ENCODE measurements at regions of chr12 and their contacts with region 1.

Region 1: GRCh38 chr12:96285158-96285557 is 91.0 kb downstream of the ELK3 start:
- DNase-seq: no peak
- ATAC-seq: no peak
- H3K4me3 ChIP-seq: no peak overlapping the region
- H3K4me3 Mint-ChIP-seq: no peak overlapping the region
- H3K27ac ChIP-seq: no peak overlapping the region
- H3K27ac Mint-ChIP-seq: no peak overlapping the region
- H3K4me1 ChIP-seq: no peaks in the 10 kb centered on the region
- H3K4me1 Mint-ChIP-seq: peaks cover 7% of the 10 kb centered on the region
- H3K27me3 ChIP-seq: no peaks in the 10 kb centered on the region
- H3K27me3 Mint-ChIP-seq: no peaks in the 10 kb centered on the region
- CTCF ChIP-seq: no peak

Region 2: DNA sequence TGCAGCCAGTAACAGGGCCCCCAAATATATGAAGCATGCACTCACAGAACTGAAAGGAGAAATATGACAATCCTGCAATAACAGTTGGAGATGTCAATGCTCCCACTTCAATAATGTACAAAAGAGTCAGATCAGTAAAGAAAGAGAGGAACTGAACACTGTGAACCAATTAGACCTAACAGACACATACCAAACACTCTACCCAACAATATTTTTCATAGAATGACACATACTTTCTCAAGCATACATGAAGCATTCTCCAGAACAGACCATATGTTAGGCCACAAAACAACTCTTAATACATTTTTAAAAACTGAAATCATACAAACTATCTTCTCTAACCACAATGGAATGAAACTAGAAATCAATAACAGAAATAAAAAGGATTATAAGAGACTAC is 10.8 kb before region 1 on chr12:
- CTCF ChIA-PET with region 1: no interaction called
- POLR2A ChIA-PET with region 1: no interaction called
- intact Hi-C with region 1: loop called in 1 of 2 experiments (anchors 2 kb)
- DNase-seq: no peak
- ATAC-seq: no peak
- H3K4me3 ChIP-seq: no peak overlapping the region
- H3K4me3 Mint-ChIP-seq: no peak overlapping the region
- H3K27ac ChIP-seq: peak overlapping the region in 1 of 2 experiments; percentile 10
- H3K27ac Mint-ChIP-seq: no peak overlapping the region
- H3K4me1 ChIP-seq: no peaks in the 10 kb centered on the region
- H3K4me1 Mint-ChIP-seq: peaks cover 20% of the 10 kb centered on the region
- H3K27me3 ChIP-seq: no peaks in the 10 kb centered on the region
- H3K27me3 Mint-ChIP-seq: no peaks in the 10 kb centered on the region
- CTCF ChIP-seq: no peak

Region 3: DNA sequence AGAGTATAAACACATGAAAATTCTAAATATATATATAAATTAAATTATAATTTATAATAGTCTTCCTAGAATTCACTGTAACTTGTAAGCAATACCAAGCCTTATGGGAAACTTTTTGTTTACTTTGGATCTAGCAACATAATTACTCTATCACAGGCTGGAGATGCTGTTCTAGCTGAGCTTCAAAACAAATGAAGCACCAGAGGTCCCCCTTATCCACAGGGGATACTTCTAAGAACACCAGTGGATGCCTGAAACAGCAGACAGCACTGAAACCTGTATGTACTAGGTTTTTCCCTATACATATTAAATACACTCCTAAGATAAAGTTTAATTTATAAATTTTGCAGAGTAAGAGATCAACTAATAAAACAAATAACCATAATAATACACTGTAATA is 18.5 kb after region 1 on chr12:
- CTCF ChIA-PET with region 1: no interaction called
- POLR2A ChIA-PET with region 1: no interaction called
- intact Hi-C with region 1: loop called in 1 of 2 experiments (anchors 2 kb)
- DNase-seq: no peak
- ATAC-seq: no peak
- H3K4me3 ChIP-seq: no peak overlapping the region
- H3K4me3 Mint-ChIP-seq: no peak overlapping the region
- H3K27ac ChIP-seq: no peak overlapping the region
- H3K27ac Mint-ChIP-seq: no peak overlapping the region
- H3K4me1 ChIP-seq: peaks cover 3% of the 10 kb centered on the region
- H3K4me1 Mint-ChIP-seq: peaks cover 28% of the 10 kb centered on the region
- H3K27me3 ChIP-seq: no peaks in the 10 kb centered on the region
- H3K27me3 Mint-ChIP-seq: no peaks in the 10 kb centered on the region
- CTCF ChIP-seq: no peak

Measured in CD8-positive, alpha-beta T cell (primary cell).